ENCODE measurements at regions of chr17 and their contacts with region 1.

Region 1: DNA sequence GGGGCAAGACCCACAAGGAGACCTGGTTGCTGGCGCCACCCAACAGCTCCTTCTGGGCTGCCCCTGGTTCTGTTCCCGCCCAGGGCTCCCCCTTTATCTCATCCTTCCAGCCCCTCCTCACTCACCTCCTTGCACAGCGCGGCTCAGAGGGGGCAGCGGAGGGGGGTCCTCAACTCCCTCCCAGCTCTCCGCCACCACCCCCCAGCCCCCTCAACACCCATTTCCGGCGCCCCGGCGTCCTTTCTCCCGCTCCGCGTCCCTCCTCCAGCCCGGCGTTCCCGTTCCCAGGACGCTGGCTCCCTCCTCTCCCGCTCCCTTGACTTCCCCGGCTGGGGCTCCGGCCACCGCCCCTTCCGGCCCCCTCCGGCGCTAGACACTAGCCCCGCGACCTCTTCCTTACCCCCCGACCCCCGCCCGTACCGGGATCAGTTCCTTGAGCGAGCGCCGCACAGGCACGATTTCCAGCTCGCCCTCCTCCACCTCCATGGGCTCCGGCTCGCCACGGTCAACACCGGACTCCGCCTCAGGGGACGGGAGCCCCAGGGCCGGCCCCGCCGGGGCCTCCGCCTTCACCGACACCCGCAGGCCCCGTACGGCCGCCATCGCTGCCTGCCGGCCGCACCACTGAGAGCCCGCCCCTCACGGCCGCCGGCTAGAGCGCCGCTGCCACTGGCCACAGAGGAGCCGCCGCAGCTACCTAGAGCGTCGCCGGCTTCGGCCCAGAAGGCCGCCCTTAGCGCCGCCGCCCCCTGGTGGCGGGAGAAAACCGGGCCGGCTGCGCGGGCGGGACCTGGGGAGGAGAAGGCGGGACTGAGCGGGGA is at the start of gene NCBP3:
- DNase-seq: peak; percentile 55
- ATAC-seq: peak; percentile 98
- H3K4me3 ChIP-seq: peak within 1 kb of the TSS; percentile 96
- H3K27ac ChIP-seq: peak within 1 kb of the TSS; percentile 79
- H3K4me1 ChIP-seq: peaks cover 17% of the 10 kb centered on the region
- H3K27me3 ChIP-seq: no peaks in the 10 kb centered on the region; a peak in 1 of 4 replicates
- CTCF ChIP-seq: peak; percentile 92 to 99 (median 97)
- EP300 ChIP-seq: no peak
- POLR2A ChIP-seq: peak; percentile 98
- RAD21 ChIP-seq: 0 out of 2 replicates have a peak, but pooled peaks have one; percentile 29
- polyA plus RNA-seq, gene NCBP3: 5.2 to 8.4 TPM

Region 2: GRCh38 chr17:3750926-3751325 is 94.9 kb before region 1 on chr17:
- CTCF ChIA-PET with region 1: interaction called, 12 read pairs
- POLR2A ChIA-PET with region 1: no interaction called
- RAD21 ChIA-PET with region 1: no interaction called
- SMC1A ChIA-PET with region 1: interaction called, 3 read pairs
- in situ Hi-C with region 1: no loop called
- intact Hi-C with region 1: no loop called
- DNase-seq: no peak
- ATAC-seq: peak; percentile 84
- H3K4me3 ChIP-seq: no peak overlapping the region
- H3K27ac ChIP-seq: no peak overlapping the region
- H3K4me1 ChIP-seq: no peaks in the 10 kb centered on the region; the same call in 1 of the 2 replicates
- H3K27me3 ChIP-seq: no peaks in the 10 kb centered on the region
- CTCF ChIP-seq: no peak
- EP300 ChIP-seq: peak in 1 of 2 experiments; percentile 40; a peak in 1 of 4 replicates
- POLR2A ChIP-seq: no peak
- RAD21 ChIP-seq: no peak

Region 3: GRCh38 chr17:3835410-3836229 is 10.2 kb before region 1 on chr17:
- CTCF ChIA-PET with region 1: interaction called, 13 read pairs
- POLR2A ChIA-PET with region 1: no interaction called
- RAD21 ChIA-PET with region 1: no interaction called
- SMC1A ChIA-PET with region 1: interaction called, 3 read pairs
- in situ Hi-C with region 1: no loop called
- intact Hi-C with region 1: no loop called
- DNase-seq: no peak
- ATAC-seq: no peak
- H3K4me3 ChIP-seq: no peak overlapping the region
- H3K27ac ChIP-seq: no peak overlapping the region
- H3K4me1 ChIP-seq: no peaks in the 10 kb centered on the region
- H3K27me3 ChIP-seq: no peaks in the 10 kb centered on the region
- CTCF ChIP-seq: no peak
- EP300 ChIP-seq: no peak
- POLR2A ChIP-seq: no peak
- RAD21 ChIP-seq: no peak

Region 4: DNA sequence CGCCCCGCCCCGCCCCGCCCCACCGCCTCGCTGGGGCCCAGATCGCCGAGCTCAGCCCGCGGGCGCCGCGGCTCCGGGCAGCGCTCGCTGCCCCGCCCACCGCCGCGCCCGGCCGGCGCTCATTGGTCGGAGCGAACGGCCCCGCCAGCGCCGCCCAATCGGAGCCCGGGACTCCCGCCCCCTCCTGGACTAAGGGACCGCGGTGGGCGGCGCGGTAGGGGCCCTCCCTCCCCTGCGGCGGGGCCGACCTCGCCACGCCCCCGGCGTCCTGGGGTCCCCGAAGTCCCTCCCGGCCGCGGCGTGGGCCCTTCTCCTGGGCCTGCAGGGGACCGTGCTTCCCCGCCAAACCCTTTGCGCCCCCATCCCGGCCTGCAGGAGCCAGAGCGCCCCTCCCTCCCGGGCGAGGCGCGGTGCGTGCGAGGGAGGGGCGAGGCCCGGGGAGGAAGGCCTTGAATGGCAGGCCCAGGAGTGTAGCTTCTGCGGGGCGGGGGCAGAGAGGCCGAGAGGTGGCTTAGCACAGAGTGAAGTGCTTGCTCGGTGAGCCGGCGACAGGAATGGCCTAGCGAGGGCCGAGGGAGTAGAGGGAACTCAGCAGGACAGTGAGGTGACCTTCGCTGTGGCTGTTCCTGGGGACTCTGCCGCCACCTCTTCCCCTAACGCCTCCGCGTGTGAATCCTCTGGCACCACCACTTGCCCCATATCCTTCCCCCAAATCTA is 47.3 kb after region 1 on chr17 and contains the start of gene CAMKK1:
- CTCF ChIA-PET with region 1: interaction called, 10 read pairs
- POLR2A ChIA-PET with region 1: interaction called, 3 read pairs
- RAD21 ChIA-PET with region 1: no interaction called
- SMC1A ChIA-PET with region 1: interaction called, 3 read pairs
- in situ Hi-C with region 1: no loop called
- intact Hi-C with region 1: no loop called
- DNase-seq: no peak
- ATAC-seq: peak; percentile 97
- H3K4me3 ChIP-seq: peak within 1 kb of the TSS; percentile 74; the same call in 1 of the 2 replicates
- H3K27ac ChIP-seq: peak within 1 kb of the TSS; percentile 55; the same call in 1 of the 2 replicates
- H3K4me1 ChIP-seq: peaks cover 3% of the 10 kb centered on the region
- H3K27me3 ChIP-seq: peaks cover 0 to 2% of the 10 kb centered on the region in 2 experiments; a peak in 1 of 4 replicates
- CTCF ChIP-seq: no peak
- EP300 ChIP-seq: 0 out of 4 replicates have a peak, but pooled peaks of 1 of the 2 experiments have one; percentile 14
- POLR2A ChIP-seq: peak; percentile 51
- RAD21 ChIP-seq: no peak
- polyA plus RNA-seq, gene CAMKK1: 0.06 to 0.09 TPM

Region 5: DNA sequence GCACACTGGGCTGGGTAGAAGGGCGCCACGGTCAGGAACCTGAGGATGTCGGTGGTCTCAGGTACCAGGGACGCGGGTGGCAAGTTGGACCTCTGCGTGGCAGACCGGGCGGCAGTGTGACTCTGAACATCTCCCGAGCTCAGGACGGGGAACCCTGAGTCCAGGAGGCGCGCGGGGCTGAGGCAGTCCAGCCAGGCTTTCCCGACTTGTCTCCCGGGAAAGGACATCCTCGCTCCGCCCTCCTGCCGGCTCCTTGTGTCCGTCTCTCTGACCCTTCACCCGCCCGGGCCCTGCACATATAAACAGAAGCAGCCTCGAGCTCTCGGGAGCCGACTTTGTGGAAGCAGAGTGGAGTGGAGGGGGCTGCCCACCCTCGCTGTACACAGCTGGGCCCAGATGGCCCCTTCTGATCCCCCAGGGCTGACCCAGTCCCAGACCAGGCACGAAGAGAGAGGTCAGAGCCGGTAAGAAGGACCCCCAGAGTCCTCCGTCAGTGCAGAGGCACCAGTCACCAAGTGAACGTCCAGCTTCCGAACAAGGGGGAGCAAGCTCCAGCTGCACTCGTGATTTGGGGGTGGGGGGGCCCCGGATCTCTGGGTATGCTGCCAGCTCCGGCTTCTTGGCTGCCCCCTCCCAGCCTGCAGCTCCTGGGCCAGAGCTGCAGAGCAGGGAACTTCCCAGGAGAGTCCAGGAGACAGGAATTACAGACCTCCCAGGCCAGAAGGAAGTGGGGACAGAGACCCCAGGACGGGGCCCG is 78.9 kb after region 1 on chr17:
- CTCF ChIA-PET with region 1: no interaction called
- POLR2A ChIA-PET with region 1: no interaction called
- RAD21 ChIA-PET with region 1: no interaction called
- SMC1A ChIA-PET with region 1: no interaction called
- in situ Hi-C with region 1: no loop called
- intact Hi-C with region 1: no loop called
- DNase-seq: no peak
- ATAC-seq: no peak
- H3K4me3 ChIP-seq: no peak overlapping the region
- H3K27ac ChIP-seq: no peak overlapping the region
- H3K4me1 ChIP-seq: no peaks in the 10 kb centered on the region
- H3K27me3 ChIP-seq: no peaks in the 10 kb centered on the region
- CTCF ChIP-seq: no peak
- EP300 ChIP-seq: no peak
- POLR2A ChIP-seq: no peak
- RAD21 ChIP-seq: no peak

Region 6: DNA sequence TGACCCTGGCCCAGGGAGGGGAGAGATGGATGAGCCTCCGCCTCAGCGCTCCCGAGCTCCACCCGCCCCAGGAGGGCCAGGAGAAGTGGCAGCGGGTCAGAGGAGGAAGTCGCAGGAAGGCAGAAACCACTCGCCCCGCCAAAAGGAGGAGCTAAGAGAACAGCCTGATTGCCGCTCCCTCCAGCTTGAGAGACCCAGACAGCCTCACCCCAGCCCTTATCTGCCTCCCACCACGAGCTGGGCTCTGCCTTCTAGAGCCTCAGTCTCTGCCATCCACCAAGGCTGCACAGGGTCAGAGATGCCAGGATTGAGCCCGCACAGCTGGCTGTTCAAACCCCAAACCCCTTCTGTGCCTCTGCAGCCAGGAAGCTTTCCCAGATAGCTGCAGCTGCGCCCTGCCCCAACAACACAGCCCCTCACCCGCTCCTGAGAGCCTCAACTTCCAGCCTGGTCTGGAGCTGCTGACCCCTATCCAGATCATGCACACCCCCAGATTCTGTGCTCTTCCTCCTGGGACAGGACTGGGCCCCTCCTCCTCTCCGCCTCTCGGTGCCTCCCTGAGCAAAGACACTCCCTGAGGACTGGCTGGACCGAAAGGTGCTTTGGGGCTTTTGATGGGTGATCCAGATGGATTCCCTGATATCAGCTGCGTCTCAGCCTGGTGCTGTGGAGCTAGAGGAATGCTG is 119.4 kb after region 1 on chr17:
- CTCF ChIA-PET with region 1: interaction called, 10 read pairs
- POLR2A ChIA-PET with region 1: interaction called, 3 read pairs
- RAD21 ChIA-PET with region 1: interaction called, 3 read pairs
- SMC1A ChIA-PET with region 1: interaction called, 4 read pairs
- in situ Hi-C with region 1: no loop called
- intact Hi-C with region 1: no loop called
- DNase-seq: peak; percentile 33
- ATAC-seq: peak; percentile 79
- H3K4me3 ChIP-seq: peak overlapping the region; percentile 90
- H3K27ac ChIP-seq: peak overlapping the region; percentile 62
- H3K4me1 ChIP-seq: peaks cover 44% of the 10 kb centered on the region
- H3K27me3 ChIP-seq: no peaks in the 10 kb centered on the region
- CTCF ChIP-seq: peak in 1 of 3 experiments; percentile 50; a peak in 2 of 6 replicates
- EP300 ChIP-seq: no peak
- POLR2A ChIP-seq: peak; percentile 85
- RAD21 ChIP-seq: no peak

Measured in GM12878 (cell line).